HEK293 (cell line): ENCODE measurements at regions of chr2 and their contacts with region 1.

Region 1: DNA sequence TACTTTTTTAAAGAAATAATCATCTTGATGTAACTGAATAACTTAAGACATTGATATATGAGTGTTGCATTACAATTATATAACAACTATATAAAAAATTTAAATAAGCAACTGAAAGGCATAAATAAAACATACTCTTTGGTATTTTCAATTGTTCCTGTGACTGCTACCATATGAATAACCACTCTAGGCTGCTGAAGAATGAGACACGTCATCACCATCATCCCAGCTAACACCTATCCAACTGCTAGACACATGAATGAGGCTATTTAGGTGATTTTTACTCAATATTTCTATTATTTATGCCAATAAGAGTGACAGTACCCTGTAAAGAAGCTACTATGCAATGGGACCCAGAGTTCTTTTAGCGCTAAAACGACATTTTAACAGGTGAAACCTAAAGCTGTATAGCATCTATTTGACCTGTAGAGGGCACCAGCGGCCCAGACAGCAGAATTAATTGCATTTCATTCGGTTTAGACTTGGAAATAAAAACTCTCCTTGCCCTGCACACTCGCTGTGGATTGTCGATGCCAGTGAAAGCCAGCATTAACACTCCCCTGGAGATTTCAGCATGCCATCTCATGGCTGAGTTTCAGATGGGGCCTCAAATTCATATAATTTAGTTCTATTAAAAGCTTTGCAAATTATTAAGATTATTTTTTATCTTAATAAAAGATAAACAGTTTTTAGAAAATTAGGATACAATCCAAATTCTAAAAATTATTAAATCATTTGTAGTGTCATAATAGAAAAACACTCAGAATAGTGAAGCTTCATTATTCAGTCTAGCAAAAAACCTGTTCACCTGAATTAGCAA is 89.4 kb upstream of the MAP2 start:
- H3K4me3 ChIP-seq: no peak overlapping the region
- H3K27ac ChIP-seq: no peak overlapping the region
- H3K4me1 ChIP-seq: no peaks in the 10 kb centered on the region
- CTCF ChIP-seq: peak; percentile 55

Region 2: GRCh38 chr2:208407667-208408066 is 926.7 kb before region 1 on chr2:
- CTCF ChIA-PET with region 1: interaction called, 12 read pairs
- POLR2A ChIA-PET with region 1: no interaction called
- H3K4me3 ChIP-seq: no peak overlapping the region
- H3K27ac ChIP-seq: no peak overlapping the region
- H3K4me1 ChIP-seq: peaks cover 2% of the 10 kb centered on the region; the same call in 1 of the 2 replicates
- CTCF ChIP-seq: no peak

Region 3: GRCh38 chr2:209351636-209352035 is 17.2 kb after region 1 on chr2:
- CTCF ChIA-PET with region 1: interaction called, 18 read pairs
- POLR2A ChIA-PET with region 1: no interaction called
- H3K4me3 ChIP-seq: no peak overlapping the region
- H3K27ac ChIP-seq: no peak overlapping the region
- H3K4me1 ChIP-seq: peaks cover 3% of the 10 kb centered on the region; the same call in 1 of the 2 replicates
- CTCF ChIP-seq: no peak

Region 4: DNA sequence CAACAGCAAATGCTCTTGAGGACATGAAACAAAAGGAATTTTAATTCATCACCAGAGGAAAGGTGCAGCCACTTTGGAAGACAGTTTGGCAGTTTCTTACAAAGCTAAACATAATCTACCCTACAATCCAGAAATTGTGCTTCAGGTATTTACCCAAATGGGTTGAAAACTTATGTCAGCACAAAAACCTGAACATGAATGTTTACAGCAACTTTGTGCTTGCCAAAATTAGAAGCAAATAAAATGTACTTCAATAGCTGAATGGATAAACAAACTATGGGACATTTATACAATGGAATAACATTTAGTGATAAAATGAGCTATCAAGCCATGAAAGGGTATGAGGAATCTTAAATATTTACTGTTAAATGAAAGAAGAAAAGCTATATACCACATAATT is 82.5 kb after region 1 on chr2:
- CTCF ChIA-PET with region 1: interaction called, 97 read pairs
- POLR2A ChIA-PET with region 1: no interaction called
- H3K4me3 ChIP-seq: no peak overlapping the region
- H3K27ac ChIP-seq: no peak overlapping the region
- H3K4me1 ChIP-seq: no peaks in the 10 kb centered on the region
- CTCF ChIP-seq: no peak

Region 5: DNA sequence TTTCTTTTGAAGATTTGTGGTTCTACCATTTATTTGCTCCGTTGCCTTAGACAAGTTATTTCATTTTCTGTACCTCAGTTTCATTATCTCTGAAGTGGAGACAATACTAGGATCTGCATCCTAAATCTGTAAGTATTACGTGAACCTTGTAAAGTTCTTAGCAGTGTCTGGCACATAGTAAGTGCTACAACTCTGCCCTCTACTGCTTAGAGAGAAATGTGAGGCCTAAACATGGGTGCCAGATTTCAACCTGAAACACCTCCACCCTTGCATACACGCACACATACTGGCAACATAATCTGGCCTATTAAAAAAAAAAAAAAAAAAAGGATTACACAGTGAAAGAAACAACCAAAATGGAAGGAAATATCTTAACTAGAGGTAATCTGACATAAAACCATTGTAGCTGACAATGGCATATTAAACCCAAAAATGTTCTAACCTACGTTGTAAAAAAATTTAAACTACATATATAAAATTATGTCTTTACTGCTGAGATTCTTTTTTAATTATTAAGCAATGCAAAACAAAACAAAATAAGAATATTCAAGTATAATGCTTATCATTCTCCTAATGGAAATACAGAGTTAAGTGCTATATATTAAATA is 222.1 kb after region 1 on chr2:
- CTCF ChIA-PET with region 1: interaction called, 40 read pairs
- POLR2A ChIA-PET with region 1: no interaction called
- H3K4me3 ChIP-seq: no peak overlapping the region
- H3K27ac ChIP-seq: no peak overlapping the region
- H3K4me1 ChIP-seq: no peaks in the 10 kb centered on the region
- CTCF ChIP-seq: peak; percentile 67

Region 6: GRCh38 chr2:209577376-209578357 is 243.3 kb after region 1 on chr2:
- CTCF ChIA-PET with region 1: interaction called, 37 read pairs
- POLR2A ChIA-PET with region 1: no interaction called
- H3K4me3 ChIP-seq: no peak overlapping the region
- H3K27ac ChIP-seq: no peak overlapping the region
- H3K4me1 ChIP-seq: no peaks in the 10 kb centered on the region
- CTCF ChIP-seq: no peak